Activated CD4-positive, alpha-beta T cell treated with anti-CD3 and anti-CD28 coated beads, Interleukin-2, amount 10 ng/mL, durations not matched to agents 24 days and 14 days (primary cell): ENCODE measurements at regions of chr5 and their contacts with region 1.

Region 1: DNA sequence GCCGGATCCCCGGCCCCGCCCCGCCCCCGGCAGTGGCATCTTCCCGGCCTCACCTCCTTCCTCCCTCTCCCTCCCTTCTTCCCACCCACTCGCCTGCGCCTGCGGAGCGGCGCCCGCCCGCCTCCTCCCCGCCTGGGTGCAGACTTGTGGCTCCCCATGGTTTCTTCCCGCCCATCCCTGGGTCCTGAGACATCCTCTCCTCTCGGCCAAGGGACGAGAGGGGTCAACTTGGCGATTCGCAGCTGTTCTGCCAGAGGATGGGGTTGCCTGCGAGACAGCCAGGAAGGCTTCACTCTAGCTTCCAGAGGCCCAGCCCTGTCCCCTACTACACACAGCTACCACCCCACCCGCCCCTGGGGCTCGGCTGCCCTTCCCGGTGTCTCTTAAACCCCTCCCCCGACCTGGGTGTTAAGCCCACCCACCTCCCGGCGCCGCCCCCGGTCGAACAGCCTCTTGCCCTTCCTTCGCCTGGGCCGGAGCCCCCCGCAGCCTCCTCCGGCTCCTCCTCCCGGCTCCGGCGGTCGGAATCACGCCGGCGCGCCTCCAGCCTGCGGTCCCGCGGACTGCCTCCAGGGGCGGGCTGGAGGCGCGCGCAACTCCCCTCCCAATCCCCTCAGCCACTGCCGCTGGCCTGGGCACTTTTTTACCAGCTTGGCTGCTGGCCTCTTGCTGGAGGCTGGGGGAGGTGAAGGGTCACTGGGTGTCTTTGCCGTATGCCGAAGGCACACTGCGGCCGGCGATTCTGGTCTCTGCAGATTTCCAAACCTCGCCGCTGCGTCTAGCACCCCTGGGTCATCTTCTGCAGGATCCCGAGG is 1.9 kb downstream of the JADE2 start:
- DNase-seq: peak; percentile 92
- H3K4me3 Mint-ChIP-seq: peak overlapping the region; percentile 89
- H3K27ac Mint-ChIP-seq: peak overlapping the region; percentile 94
- H3K4me1 Mint-ChIP-seq: peaks cover 30% of the 10 kb centered on the region
- H3K27me3 Mint-ChIP-seq: no peaks in the 10 kb centered on the region

Region 2: DNA sequence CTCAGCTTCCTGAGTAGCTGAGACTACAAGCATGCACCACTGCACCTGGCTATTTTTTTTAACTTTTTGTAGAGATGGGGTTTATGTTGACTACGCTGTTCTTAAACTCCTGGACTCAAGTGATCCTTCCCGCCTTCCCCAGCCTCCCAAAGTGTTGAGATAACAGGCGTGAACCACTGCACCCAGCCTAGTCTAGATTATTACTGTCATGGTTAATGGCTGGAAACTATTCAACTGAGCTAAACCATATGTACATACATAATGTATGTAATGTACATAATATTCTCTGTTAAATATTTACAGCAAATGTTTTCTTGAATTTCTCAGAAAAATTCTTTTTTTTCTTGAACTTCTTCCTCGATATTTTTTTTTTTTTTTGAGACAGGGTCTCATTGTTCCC is 322.8 kb before region 1 on chr5:
- intact Hi-C with region 1: no loop called
- DNase-seq: no peak
- H3K4me3 Mint-ChIP-seq: no peak overlapping the region
- H3K27ac Mint-ChIP-seq: no peak overlapping the region
- H3K4me1 Mint-ChIP-seq: peaks cover 12% of the 10 kb centered on the region
- H3K27me3 Mint-ChIP-seq: no peaks in the 10 kb centered on the region

Region 3: GRCh38 chr5:134225618-134226440 is 301.5 kb before region 1 on chr5 and contains the start of gene PPP2CA:
- intact Hi-C with region 1: loop called (anchors 1 kb)
- DNase-seq: peak; percentile 100
- H3K4me3 Mint-ChIP-seq: peak within 1 kb of the TSS; percentile 97
- H3K27ac Mint-ChIP-seq: peak within 1 kb of the TSS; percentile 100
- H3K4me1 Mint-ChIP-seq: peaks cover 42% of the 10 kb centered on the region
- H3K27me3 Mint-ChIP-seq: no peaks in the 10 kb centered on the region
- total RNA-seq, gene PPP2CA: 177 and 199 TPM in 2 replicates

Region 4: DNA sequence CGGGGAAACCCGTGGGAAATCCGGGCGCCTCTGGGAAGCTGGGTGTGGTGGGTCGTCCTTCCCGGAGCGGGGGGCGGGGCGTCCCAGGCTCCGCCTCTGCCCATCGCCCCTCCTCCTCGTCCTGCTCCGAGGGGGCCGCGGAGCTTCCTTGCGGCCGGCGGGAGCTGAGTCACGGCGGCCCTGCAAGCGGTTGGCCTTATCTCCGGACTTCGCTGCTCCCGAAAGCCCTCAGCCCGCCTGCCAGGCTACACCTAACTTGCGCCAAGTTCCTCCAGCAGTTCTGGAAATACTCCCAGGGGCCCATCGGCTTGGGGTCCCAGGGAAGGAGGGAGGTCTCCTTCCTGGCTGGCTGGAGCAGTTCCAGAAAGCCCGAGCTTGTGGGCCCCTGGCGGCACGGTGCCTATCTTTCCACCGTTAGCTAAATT is 61.5 kb before region 1 on chr5:
- intact Hi-C with region 1: loop called (anchors 1 kb)
- DNase-seq: peak; percentile 87
- H3K4me3 Mint-ChIP-seq: peak overlapping the region; percentile 66
- H3K27ac Mint-ChIP-seq: peak overlapping the region; percentile 57
- H3K4me1 Mint-ChIP-seq: peaks cover 15% of the 10 kb centered on the region
- H3K27me3 Mint-ChIP-seq: no peaks in the 10 kb centered on the region

Region 5: GRCh38 chr5:134494780-134495179 is 32.6 kb before region 1 on chr5:
- intact Hi-C with region 1: no loop called
- DNase-seq: no peak
- H3K4me3 Mint-ChIP-seq: no peak overlapping the region
- H3K27ac Mint-ChIP-seq: no peak overlapping the region
- H3K4me1 Mint-ChIP-seq: peaks cover 8% of the 10 kb centered on the region
- H3K27me3 Mint-ChIP-seq: no peaks in the 10 kb centered on the region

Region 6: GRCh38 chr5:134541736-134542376 is 14.5 kb after region 1 on chr5:
- intact Hi-C with region 1: loop called (anchors 2 kb)
- DNase-seq: peak; percentile 65
- H3K4me3 Mint-ChIP-seq: no peak overlapping the region
- H3K27ac Mint-ChIP-seq: no peak overlapping the region
- H3K4me1 Mint-ChIP-seq: peaks cover 45% of the 10 kb centered on the region
- H3K27me3 Mint-ChIP-seq: no peaks in the 10 kb centered on the region

Region 7: DNA sequence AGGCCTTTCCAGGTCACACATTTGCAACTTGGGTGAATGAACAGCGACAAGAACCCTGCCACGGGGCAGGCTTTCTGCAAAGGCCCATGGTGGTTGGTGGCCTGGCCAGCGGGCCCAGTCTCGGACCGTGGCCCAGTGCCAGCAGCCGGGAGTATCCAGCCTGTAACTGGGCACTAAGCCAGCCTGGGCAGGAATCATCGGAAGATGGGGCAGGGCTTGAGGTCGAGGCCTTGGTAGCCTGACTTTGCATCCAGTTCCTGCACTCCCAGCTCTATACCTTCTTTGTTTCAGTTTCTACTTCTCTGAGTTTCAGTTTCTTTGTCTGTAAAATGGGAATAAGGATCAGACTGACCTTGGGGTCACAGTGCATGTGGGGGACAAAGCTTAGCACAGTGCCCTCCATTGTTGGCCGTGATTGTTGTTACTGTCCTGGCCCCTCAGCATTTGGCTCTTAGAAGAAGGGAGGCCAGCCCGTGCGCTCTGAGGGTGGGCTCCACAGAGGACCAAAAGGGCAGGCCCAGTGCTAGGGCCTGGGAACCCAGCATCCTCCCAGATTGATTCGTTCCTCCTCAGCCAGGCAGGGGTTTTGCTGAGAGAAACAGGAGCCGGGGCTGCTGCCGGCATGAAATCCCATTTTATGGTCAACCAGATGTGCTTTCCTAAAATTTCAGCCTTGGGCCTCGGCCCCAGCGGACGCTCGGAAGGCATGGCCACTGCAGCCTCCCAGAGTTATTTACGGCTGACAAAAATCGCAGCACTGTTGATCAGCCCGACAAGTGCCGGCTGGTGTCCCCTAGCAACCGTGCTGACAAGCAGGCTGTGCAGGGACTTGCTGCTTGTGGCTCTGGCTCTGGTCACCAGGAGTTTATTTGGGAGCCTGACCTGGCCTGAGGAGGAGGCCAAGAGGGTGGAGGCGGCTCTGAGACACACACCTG is 41.7 kb after region 1 on chr5:
- intact Hi-C with region 1: no loop called
- DNase-seq: no peak
- H3K4me3 Mint-ChIP-seq: no peak overlapping the region
- H3K27ac Mint-ChIP-seq: no peak overlapping the region
- H3K4me1 Mint-ChIP-seq: peaks cover 12% of the 10 kb centered on the region
- H3K27me3 Mint-ChIP-seq: no peaks in the 10 kb centered on the region

Region 8: DNA sequence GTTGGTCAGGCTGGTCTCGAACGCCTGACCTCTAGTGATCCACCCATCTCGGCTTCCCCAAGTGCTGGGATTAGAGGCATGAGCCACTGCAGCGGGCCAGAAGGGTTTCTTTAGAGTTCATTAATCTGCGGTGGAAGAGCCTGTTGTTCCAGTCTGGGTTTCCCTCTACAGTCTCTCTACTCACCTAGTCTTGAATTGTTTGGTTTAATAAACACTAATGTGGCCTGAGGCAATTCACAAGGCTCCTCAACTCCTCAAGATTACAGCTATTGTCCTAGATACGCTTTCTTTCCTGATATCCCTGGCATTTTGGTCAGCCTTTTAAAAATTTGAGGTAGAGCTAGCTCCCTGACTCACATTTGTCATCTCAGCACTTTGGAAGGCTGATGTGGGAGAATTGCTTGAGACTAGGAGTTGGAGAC is 109.8 kb after region 1 on chr5:
- intact Hi-C with region 1: loop called (anchors 1 kb)
- DNase-seq: no peak
- H3K4me3 Mint-ChIP-seq: no peak overlapping the region
- H3K27ac Mint-ChIP-seq: no peak overlapping the region
- H3K4me1 Mint-ChIP-seq: peaks cover 6% of the 10 kb centered on the region
- H3K27me3 Mint-ChIP-seq: no peaks in the 10 kb centered on the region

Region 9: GRCh38 chr5:135063631-135064570 is 536.5 kb after region 1 on chr5:
- intact Hi-C with region 1: no loop called
- DNase-seq: no peak
- H3K4me3 Mint-ChIP-seq: no peak overlapping the region
- H3K27ac Mint-ChIP-seq: no peak overlapping the region
- H3K4me1 Mint-ChIP-seq: no peaks in the 10 kb centered on the region
- H3K27me3 Mint-ChIP-seq: peaks cover 2% of the 10 kb centered on the region